ENCODE measurements at regions of chr20 and their contacts with region 1.

Region 1: GRCh38 chr20:50545126-50545525 is 34.9 kb downstream of the PTPN1 start:
- DNase-seq: no peak
- ATAC-seq: no peak

Region 2: DNA sequence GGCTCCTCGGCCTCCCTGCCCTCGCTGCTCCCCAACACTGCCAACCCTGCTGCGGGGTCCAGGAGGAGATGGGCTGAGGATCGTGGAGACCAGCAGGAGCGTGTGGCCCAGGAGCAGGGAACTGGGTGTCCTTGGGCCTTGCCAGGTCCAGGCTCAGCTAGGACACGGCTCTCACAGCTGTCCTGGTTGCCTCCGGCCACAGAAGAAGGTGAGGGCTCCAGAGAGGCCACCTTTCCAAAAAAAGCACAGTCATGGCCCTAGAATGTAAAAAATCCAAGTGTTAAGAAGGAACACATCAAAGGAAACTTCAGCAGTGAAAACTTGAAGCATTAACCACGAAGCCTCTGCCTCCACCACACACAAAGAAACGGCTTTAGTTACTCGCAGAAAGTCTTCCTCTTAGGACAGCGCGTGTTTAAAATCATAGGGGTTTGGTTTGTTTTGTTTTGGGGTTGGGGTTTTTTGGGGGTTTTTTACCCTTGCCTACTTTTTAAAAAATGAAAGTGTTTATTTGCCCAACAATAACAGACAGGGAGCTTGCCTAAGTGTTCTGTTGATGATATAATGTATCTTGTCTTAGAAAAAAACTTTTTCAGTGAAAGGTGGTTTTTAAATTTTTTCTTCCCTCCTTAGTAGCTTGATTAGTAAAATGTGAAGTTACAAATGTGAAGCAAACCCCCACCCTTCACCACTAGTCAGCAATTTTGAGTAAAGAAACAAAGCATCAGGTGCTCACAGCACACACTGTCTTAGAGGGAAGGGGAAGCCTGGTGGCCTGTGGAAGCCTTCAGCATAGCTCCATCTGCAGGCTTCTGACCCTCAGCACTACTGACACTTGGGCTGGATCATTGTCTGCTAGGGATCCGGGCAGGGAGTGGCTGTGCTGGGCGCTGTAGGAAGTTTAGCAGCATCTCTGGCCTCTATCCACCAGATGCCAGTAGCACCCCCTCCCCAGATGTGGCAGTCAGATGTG is 25.0 kb after region 1 on chr20:
- intact Hi-C with region 1: loop called (anchors 2 kb)
- DNase-seq: no peak
- ATAC-seq: peak; percentile 29

Region 3: DNA sequence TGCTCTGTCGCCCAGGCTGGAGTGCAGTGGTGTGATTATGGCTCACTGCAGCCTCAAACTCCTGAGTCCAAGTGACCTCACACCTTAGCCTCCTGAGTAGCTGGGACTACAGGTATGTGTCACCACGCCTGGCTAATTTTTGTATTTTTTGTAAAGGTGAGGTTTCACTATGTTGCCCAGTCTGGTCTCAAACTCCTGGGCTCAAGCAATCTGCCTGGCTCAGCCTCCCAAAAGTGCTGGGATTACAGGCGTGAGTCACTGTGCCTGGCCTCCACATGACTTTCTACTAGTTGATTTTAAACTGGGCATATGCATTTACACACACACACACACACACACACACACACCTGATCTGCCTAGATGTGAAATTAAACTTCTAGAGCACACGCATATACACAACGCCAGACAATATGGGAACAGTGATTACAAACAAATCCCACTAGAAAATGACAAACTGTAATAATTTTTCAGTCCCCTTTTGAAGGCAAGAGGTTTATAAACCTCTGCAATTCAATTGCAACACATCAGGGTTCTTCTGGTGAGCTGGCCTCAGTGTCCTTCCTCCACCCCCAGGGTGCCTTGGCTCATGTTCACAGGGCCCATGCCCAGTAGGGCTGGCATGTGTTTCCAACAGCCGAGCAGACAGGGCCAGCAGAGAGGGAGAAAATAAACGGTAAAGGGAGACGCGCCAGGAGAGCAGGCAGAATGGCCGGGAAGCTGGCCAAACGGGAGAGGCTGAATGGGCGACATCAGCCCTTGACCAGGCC is 217.5 kb after region 1 on chr20:
- intact Hi-C with region 1: no loop called
- DNase-seq: peak; percentile 85
- ATAC-seq: peak; percentile 96

Measured in Right ventricle myocardium inferior (tissue), 1 donor.